HEK293 (cell line): ENCODE measurements at regions of chr17 and their contacts with region 1.

Region 1: GRCh38 chr17:57671667-57672632 is 73.1 kb downstream of the CCDC182 start:
- H3K4me3 ChIP-seq: no peak overlapping the region
- H3K27ac ChIP-seq: no peak overlapping the region
- H3K4me1 ChIP-seq: peaks cover 8% of the 10 kb centered on the region
- CTCF ChIP-seq: peak; percentile 82

Region 2: GRCh38 chr17:57597531-57598453 is 74.2 kb before region 1 on chr17:
- CTCF ChIA-PET with region 1: interaction called, 80 read pairs
- POLR2A ChIA-PET with region 1: interaction called, 3 read pairs
- H3K4me3 ChIP-seq: no peak overlapping the region
- H3K27ac ChIP-seq: no peak overlapping the region
- H3K4me1 ChIP-seq: 0 out of 2 replicates have a peak, but pooled peaks cover 5% of the 10 kb centered on the region
- CTCF ChIP-seq: peak; percentile 75

Region 3: DNA sequence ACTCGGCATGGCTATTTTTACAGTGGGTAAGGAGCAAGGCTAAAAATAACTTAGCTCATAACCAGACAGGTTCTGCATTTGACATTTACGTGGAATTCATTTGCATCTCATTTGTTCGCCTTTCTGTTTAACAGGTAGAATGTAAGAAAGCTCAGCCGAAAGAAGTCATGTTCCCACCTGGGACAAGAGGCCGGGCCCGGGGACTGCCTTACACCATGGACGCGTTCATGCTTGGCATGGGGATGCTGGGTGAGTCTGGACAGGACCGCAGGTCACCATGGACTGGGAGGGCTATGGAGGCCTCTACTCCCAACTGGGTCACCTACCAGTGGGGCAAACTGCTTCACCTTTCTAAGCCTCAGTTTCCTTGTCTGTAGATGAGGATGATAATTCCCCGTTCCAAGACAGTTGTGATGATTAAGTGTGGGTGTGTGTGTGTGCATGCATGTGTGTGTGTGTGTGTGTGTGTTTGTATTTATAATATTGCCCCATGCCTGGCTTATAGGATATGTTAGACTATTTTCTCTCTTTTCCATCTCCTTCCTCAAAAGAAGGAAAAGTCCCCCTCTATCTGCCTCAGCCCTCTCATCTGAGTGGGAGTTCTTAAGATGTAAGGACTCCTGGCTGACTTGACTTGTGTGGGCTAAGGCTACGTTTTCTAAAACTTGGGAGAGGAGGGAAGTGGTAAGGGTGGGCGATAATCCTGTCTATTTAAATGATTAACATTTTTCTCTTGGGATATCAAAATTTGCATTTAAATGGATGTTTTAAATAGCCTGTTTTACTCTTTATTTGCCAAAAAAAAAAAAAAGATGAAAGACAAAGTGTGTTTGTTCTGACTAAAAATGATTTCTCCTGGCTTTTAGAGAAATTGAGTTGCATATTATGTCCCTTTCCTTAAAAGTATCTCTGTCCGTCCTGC is 55.9 kb before region 1 on chr17:
- CTCF ChIA-PET with region 1: interaction called, 10 read pairs
- POLR2A ChIA-PET with region 1: no interaction called
- H3K4me3 ChIP-seq: no peak overlapping the region
- H3K27ac ChIP-seq: no peak overlapping the region
- H3K4me1 ChIP-seq: peaks cover 6% of the 10 kb centered on the region; the same call in 1 of the 2 replicates
- CTCF ChIP-seq: no peak

Region 4: GRCh38 chr17:57657201-57657600 is 14.7 kb before region 1 on chr17:
- CTCF ChIA-PET with region 1: interaction called, 51 read pairs
- POLR2A ChIA-PET with region 1: interaction called, 4 read pairs
- H3K4me3 ChIP-seq: no peak overlapping the region
- H3K27ac ChIP-seq: no peak overlapping the region
- H3K4me1 ChIP-seq: peaks cover 2% of the 10 kb centered on the region
- CTCF ChIP-seq: no peak

Region 5: DNA sequence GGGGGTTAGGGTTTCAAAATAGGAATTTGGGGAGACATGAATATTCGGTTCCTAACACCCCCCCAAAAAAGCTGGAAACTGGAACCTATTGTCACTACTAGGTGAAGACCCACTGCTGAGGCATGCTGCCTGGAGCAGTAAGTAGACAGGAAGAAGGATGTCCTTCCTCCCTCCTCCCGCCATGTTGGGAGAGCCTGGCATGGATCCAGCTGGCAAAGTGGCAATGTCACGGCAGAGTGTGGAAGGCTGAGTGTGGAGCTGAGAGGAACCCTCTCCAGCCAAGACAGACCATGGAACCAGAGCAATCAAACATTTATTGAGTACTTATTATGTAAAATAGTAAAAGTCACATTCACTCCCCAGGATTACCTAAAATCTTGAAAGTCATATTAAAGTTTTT is 24.1 kb after region 1 on chr17:
- CTCF ChIA-PET with region 1: interaction called, 16 read pairs
- POLR2A ChIA-PET with region 1: no interaction called
- H3K4me3 ChIP-seq: no peak overlapping the region
- H3K27ac ChIP-seq: no peak overlapping the region
- H3K4me1 ChIP-seq: no peaks in the 10 kb centered on the region
- CTCF ChIP-seq: no peak

Region 6: DNA sequence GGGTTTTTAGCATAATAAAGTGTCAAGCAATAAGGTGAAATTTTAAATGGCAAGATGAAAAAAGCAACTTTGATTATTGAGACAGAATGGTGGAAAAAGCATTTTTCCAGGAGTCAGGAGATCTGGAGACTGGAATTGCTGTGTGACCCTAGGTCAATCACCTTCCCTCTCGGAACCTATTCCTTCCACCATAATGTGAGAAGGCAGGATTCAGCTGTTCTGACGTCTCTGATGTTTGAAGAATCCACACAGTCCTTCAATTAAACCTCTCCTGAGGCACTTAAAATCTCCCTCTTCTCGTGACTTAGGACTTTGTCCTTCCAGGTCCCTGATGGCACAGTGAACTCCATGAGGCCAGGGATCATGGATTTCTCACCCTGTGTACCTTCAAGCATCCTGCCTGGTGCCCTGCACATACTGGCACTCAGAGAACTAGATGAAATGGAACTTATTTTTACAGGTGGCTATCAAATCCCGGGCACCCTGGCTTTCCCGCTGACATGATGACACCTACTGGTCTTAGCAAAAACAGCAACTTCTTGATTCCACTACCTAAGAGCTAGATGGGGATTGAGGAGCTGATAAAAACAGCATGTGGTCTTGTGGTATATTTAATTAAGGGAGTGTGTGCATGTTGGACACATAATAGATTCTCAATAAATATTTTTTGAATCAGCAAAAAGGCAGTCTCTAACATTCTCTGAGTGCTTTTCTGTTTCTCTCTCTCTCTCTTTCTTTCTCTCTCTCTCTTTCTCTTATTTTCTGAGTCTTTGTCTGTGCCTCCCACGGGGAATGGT is 75.5 kb after region 1 on chr17:
- CTCF ChIA-PET with region 1: interaction called, 11 read pairs
- POLR2A ChIA-PET with region 1: no interaction called
- H3K4me3 ChIP-seq: no peak overlapping the region
- H3K27ac ChIP-seq: no peak overlapping the region
- H3K4me1 ChIP-seq: no peaks in the 10 kb centered on the region
- CTCF ChIP-seq: peak; percentile 55; the same call in 1 of the 2 replicates

Region 7: DNA sequence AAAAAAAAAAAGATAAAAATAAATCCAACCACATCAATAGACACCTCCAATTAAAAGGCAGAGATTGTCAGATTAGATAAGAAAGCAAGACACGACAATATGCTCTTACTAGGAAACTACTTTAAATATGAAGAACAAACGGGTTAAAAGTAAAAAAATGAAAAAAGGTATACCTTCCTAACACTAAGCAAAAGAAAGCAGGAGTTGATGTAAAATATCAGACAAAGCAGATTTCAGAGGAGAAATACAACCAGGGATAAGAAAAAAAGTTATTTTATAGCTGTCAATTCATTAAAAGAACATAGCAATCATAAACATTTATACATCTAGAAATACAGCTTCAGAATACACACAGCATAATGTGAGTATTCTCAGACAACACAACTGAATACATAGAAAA is 122.9 kb after region 1 on chr17:
- CTCF ChIA-PET with region 1: no interaction called
- POLR2A ChIA-PET with region 1: no interaction called
- H3K4me3 ChIP-seq: no peak overlapping the region
- H3K27ac ChIP-seq: no peak overlapping the region
- H3K4me1 ChIP-seq: no peaks in the 10 kb centered on the region
- CTCF ChIP-seq: no peak